Endothelial cell of umbilical vein (primary cell): ENCODE measurements at regions of chr7 and their contacts with region 1.

Region 1: DNA sequence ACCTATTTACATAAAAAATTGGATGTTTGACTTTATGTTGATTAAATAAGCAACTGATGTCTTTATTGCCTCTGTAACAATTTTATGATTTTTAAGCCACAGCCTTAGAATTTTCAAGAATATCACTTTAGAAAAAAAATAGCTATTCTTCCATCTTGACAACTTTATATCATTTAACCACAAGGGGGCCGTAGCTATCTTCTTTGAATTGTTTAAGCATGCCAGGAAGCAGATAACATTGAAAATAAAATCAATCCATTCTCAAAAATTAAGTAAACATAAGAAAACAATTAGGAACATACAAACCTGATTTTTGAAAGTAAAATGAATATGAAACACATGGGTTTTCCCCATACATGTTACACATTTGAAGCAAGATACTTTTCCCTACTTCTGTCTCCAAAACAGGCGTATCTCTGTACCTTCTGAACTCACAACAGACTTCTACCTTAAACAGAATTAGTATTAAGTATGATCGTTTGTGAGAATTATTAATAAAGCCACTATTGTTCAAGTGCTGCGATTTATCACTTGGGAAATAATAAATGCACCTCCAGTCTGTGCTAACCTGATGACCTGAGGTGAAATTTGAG is 209.0 kb downstream of the CACNA2D1 start:
- DNase-seq: peak; percentile 61
- H3K4me3 ChIP-seq: no peak overlapping the region
- H3K27ac ChIP-seq: no peak overlapping the region
- H3K4me1 ChIP-seq: peaks cover 12% of the 10 kb centered on the region
- H3K27me3 ChIP-seq: no peaks in the 10 kb centered on the region
- CTCF ChIP-seq: peak; percentile 20 to 27
- POLR2A ChIP-seq: no peak

Region 2: GRCh38 chr7:82044497-82045080 is 190.0 kb before region 1 on chr7:
- CTCF ChIA-PET with region 1: interaction called, 22 read pairs
- POLR2A ChIA-PET with region 1: no interaction called
- dilution Hi-C with region 1: no loop called
- intact Hi-C with region 1: loop called (anchors 1 kb)
- DNase-seq: peak; percentile 67
- H3K4me3 ChIP-seq: no peak overlapping the region
- H3K27ac ChIP-seq: no peak overlapping the region
- H3K4me1 ChIP-seq: peaks cover 27% of the 10 kb centered on the region
- H3K27me3 ChIP-seq: no peaks in the 10 kb centered on the region
- CTCF ChIP-seq: peak; percentile 36
- POLR2A ChIP-seq: no peak

Region 3: DNA sequence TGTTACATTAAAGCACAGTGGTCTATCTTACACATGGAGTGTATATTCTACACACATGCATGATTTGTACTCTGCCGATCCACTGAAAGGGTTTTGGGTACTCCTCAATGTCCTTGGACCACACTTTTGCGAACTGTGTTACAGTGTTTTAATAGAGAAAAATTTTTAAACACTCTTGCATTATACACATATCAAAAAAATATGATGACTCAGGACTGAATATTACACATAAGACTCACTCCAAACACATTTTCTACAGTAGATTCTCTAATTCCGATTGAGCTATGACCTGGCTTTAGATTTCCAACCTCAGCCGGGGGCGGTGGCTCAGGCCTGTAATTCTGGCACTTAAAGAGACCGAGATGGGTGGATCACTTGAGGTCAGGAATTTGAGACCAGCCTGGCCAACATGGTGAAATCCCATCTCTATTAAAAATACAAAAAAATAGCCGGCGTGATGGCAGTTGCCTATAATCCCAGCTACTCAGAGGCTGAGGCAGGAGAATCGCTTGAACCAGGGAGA is 13.3 kb before region 1 on chr7:
- CTCF ChIA-PET with region 1: interaction called, 25 read pairs
- POLR2A ChIA-PET with region 1: no interaction called
- dilution Hi-C with region 1: no loop called
- intact Hi-C with region 1: no loop called
- DNase-seq: no peak
- H3K4me3 ChIP-seq: no peak overlapping the region
- H3K27ac ChIP-seq: no peak overlapping the region
- H3K4me1 ChIP-seq: no peaks in the 10 kb centered on the region
- H3K27me3 ChIP-seq: no peaks in the 10 kb centered on the region
- CTCF ChIP-seq: no peak
- POLR2A ChIP-seq: no peak

Region 4: GRCh38 chr7:82443547-82444219 is 209.1 kb after region 1 on chr7 and contains the start of gene CACNA2D1:
- CTCF ChIA-PET with region 1: interaction called, 10 read pairs
- POLR2A ChIA-PET with region 1: no interaction called
- dilution Hi-C with region 1: no loop called
- intact Hi-C with region 1: loop called (anchors 1 kb)
- DNase-seq: peak; percentile 88
- H3K4me3 ChIP-seq: peak within 1 kb of the TSS; percentile 59 to 91 (median 79)
- H3K27ac ChIP-seq: peak within 1 kb of the TSS; percentile 80
- H3K4me1 ChIP-seq: peaks cover 19% of the 10 kb centered on the region
- H3K27me3 ChIP-seq: no peaks in the 10 kb centered on the region
- CTCF ChIP-seq: peak in 1 of 2 donors; percentile 26
- POLR2A ChIP-seq: peak; percentile 88
- total RNA-seq, gene CACNA2D1: 38.6 and 42.1 TPM in 2 replicates

Region 5: GRCh38 chr7:82572195-82572880 is 337.8 kb after region 1 on chr7:
- CTCF ChIA-PET with region 1: interaction called, 66 read pairs
- POLR2A ChIA-PET with region 1: no interaction called
- dilution Hi-C with region 1: no loop called
- intact Hi-C with region 1: loop called (anchors 1 kb)
- DNase-seq: peak; percentile 80
- H3K4me3 ChIP-seq: peak overlapping the region in 1 of 3 experiments; percentile 37
- H3K27ac ChIP-seq: no peak overlapping the region
- H3K4me1 ChIP-seq: peaks cover 4% of the 10 kb centered on the region
- H3K27me3 ChIP-seq: no peaks in the 10 kb centered on the region
- CTCF ChIP-seq: peak; percentile 76 to 87
- POLR2A ChIP-seq: no peak